Activated naive CD4-positive, alpha-beta T cell treated with anti-CD3 and anti-CD28 coated beads for 36 hours (primary cell): ENCODE measurements at regions of chr4 and their contacts with region 1.

Region 1: GRCh38 chr4:113468165-113469022 is 293.1 kb downstream of the CAMK2D start:
- DNase-seq: peak; percentile 56
- H3K4me3 Mint-ChIP-seq: no peak overlapping the region
- H3K27ac Mint-ChIP-seq: peak overlapping the region; percentile 26
- H3K4me1 Mint-ChIP-seq: peaks cover 31% of the 10 kb centered on the region
- H3K27me3 Mint-ChIP-seq: no peaks in the 10 kb centered on the region

Region 2: DNA sequence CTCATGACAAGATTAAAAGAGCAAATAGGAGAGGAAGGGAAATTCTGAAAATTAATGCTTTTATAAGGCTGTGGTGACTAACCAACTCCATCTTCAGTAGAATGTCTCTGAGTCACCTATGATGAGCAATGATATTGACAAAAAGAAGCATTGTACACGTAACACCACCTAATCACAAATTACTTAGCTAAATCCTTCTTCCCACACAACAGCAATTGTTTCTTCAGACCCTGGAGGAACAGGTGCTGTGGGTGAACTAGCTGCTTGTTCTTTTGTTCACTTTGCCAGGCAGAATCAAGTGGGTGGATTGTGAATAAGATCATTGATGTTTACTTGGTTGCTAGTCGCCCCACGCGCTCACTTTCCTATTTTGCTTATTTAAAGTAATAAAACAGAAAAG is 22.4 kb before region 1 on chr4:
- CTCF ChIA-PET with region 1: no interaction called
- intact Hi-C with region 1: loop called (anchors 1 kb)
- DNase-seq: no peak
- H3K4me3 Mint-ChIP-seq: no peak overlapping the region
- H3K27ac Mint-ChIP-seq: peak overlapping the region; percentile 66
- H3K4me1 Mint-ChIP-seq: peaks cover 27% of the 10 kb centered on the region
- H3K27me3 Mint-ChIP-seq: no peaks in the 10 kb centered on the region

Region 3: GRCh38 chr4:113849771-113850170 is 381.4 kb after region 1 on chr4:
- CTCF ChIA-PET with region 1: no interaction called
- intact Hi-C with region 1: no loop called
- DNase-seq: no peak
- H3K4me3 Mint-ChIP-seq: no peak overlapping the region
- H3K27ac Mint-ChIP-seq: no peak overlapping the region
- H3K4me1 Mint-ChIP-seq: peaks cover 3% of the 10 kb centered on the region
- H3K27me3 Mint-ChIP-seq: no peaks in the 10 kb centered on the region